Left ventricle myocardium superior (tissue), 1 donor: ENCODE measurements at regions of chr5 and their contacts with region 1.

Region 1: GRCh38 chr5:66144074-66144833 is at the start of gene SREK1:
- DNase-seq: peak; percentile 96
- ATAC-seq: peak; percentile 96
- total RNA-seq, gene SREK1: 32.3 TPM

Region 2: DNA sequence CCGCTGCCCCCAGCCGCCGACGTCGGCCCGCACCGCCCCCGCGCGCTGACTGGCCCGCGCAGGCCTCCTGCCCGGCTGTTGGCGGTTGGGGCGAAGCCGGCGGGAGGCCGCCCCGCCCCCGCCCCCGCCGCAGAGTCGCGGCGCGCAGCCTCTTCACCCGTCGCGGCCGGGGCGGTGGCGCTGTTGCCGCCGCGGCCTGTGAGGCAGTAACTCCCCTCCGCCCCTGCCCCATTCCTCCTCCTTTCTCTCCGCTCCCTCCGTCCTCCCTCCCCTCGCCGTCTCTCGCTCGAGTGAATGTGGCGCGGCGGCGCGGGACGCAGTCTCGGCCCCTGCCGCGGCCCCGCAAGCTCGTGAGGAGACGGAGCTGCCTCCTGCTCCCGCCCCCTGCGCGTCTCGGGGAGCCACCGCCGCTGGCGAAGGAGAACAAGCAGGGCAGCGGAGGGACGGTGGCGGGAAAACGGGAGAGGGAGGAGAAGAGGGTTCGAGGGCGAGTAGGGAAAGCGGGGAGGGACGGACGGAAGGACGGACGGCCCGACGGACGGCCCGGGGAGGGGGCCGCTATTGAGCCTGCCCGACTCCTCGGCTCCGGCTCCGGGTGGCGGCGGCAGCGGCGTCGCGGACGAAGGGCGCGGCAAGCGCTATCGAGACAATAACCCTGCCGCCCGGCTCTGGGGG is 218.5 kb before region 1 on chr5:
- intact Hi-C with region 1: loop called (anchors 5 kb)
- DNase-seq: peak; percentile 93
- ATAC-seq: peak; percentile 91

Region 3: GRCh38 chr5:66498791-66499207 is 354.5 kb after region 1 on chr5:
- intact Hi-C with region 1: no loop called
- DNase-seq: no peak
- ATAC-seq: peak; percentile 93